Activated T-helper 1 cell treated with anti-CD3 and anti-CD28 coated beads, Interleukin-12 subunit alpha, Interleukin-12 subunit beta, Interleukin-2, Interleukin-4 antibody, amounts not matched to agents 30 ng/mL and 10 ng/mL and 1 ng/mL, durations not matched to agents 14 hours and 24 hours and 36 hours (primary cell): ENCODE measurements at regions of chr19 and their contacts with region 1.

Region 1: DNA sequence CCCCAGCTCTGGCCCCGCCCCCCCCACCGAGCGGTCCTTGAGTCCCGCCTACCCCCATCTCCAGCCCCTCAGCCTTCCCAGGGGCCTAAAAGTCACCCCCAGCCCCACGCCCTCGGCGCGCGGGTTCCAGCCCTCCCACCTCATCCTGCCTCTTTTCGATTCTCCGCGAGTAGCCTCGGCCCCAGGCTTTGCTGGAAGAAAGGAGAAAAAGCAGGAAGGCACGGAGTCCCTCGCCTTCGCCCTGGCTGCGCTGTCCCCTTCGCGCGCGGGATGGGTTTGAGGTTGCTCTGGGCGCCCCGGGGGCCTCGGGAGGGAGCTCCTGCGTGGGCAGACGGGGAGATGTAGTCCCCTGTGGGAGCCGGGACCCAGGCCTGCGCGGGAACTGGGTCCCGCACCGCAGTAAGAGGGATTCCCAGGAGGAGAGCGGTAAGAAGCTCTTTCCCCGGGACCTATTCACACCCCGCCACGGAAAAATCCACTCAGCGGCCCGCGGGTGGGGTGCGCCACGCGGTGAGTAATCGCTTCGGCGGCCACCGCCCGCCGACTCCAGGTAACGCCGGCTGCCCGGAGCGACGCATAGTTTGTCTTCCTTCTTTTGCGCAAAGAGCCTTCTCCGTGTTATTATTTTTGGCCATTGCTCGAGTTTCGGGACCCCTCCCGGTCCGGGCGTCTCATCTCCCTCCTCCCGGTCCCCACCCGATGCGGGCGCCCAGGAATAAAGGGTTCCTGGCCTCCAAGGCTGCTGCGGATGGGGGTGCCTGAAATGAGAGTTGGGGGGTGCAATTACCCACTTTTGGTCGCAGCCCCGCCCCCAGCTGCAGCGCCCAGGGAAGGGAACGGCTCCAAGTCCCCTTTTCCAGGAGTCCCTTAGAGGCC is 865 bp upstream of the CRLF1 start:
- DNase-seq: no peak
- H3K4me3 Mint-ChIP-seq: no peak overlapping the region
- H3K27ac Mint-ChIP-seq: no peak overlapping the region
- H3K4me1 Mint-ChIP-seq: peaks cover 5% of the 10 kb centered on the region
- H3K27me3 Mint-ChIP-seq: peaks cover 65% of the 10 kb centered on the region

Region 2: GRCh38 chr19:18785179-18786128 is 178.0 kb after region 1 on chr19:
- intact Hi-C with region 1: loop called (anchors 2 kb)
- DNase-seq: peak; percentile 41
- H3K4me3 Mint-ChIP-seq: no peak overlapping the region
- H3K27ac Mint-ChIP-seq: no peak overlapping the region
- H3K4me1 Mint-ChIP-seq: peaks cover 9% of the 10 kb centered on the region
- H3K27me3 Mint-ChIP-seq: peaks cover 34% of the 10 kb centered on the region